ENCODE measurements at regions of chr1 and their contacts with region 1.

Region 1: DNA sequence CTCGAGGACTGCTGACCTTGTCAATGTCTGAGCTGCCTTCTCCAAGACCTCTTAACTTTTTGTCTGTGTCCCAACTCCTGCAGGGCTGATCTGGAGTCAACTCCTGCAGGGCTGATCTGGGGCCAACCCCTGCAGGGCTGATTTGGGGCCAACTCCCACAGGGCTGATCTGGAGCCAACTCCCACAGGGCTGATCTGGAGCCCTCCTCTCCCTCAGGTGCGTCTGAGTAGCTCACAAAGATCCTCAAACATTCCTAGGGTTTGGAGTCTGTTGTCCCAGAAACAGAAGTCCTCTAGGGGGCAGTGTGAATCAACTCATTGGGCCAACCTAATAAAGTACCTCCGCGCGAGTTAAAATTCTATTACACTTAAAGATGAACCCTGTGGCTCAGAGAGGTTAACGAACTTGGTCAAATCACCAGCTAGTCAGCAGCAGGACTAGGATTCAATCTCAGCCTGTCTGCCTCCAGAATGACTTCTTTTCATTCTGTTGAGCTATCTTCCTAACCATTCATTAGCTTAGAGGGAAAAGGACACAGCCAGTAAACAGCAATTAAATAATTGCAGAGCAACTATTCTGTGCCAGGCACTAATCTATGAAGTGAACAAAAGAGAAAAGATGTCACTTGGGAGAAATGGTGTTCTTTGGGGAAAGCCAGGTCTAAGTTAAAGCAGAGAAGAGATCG is 17.2 kb upstream of the RLF start:
- DNase-seq: peak; percentile 65
- ATAC-seq: peak; percentile 99
- H3K4me3 Mint-ChIP-seq: no peak overlapping the region
- H3K27ac Mint-ChIP-seq: peak overlapping the region; percentile 41; the same call in 1 of the 2 replicates
- H3K4me1 Mint-ChIP-seq: peaks cover 5% of the 10 kb centered on the region
- H3K27me3 Mint-ChIP-seq: peaks cover 39% of the 10 kb centered on the region
- CTCF ChIP-seq: peak; percentile 48; the same call in 1 of the 2 replicates

Region 2: GRCh38 chr1:40049725-40050124 is 94.3 kb before region 1 on chr1:
- CTCF ChIA-PET with region 1: no interaction called
- POLR2A ChIA-PET with region 1: no interaction called
- DNase-seq: no peak
- ATAC-seq: no peak
- H3K4me3 Mint-ChIP-seq: no peak overlapping the region
- H3K27ac Mint-ChIP-seq: peak overlapping the region; percentile 87
- H3K4me1 Mint-ChIP-seq: peaks cover 15% of the 10 kb centered on the region
- H3K27me3 Mint-ChIP-seq: no peaks in the 10 kb centered on the region
- CTCF ChIP-seq: no peak

Region 3: DNA sequence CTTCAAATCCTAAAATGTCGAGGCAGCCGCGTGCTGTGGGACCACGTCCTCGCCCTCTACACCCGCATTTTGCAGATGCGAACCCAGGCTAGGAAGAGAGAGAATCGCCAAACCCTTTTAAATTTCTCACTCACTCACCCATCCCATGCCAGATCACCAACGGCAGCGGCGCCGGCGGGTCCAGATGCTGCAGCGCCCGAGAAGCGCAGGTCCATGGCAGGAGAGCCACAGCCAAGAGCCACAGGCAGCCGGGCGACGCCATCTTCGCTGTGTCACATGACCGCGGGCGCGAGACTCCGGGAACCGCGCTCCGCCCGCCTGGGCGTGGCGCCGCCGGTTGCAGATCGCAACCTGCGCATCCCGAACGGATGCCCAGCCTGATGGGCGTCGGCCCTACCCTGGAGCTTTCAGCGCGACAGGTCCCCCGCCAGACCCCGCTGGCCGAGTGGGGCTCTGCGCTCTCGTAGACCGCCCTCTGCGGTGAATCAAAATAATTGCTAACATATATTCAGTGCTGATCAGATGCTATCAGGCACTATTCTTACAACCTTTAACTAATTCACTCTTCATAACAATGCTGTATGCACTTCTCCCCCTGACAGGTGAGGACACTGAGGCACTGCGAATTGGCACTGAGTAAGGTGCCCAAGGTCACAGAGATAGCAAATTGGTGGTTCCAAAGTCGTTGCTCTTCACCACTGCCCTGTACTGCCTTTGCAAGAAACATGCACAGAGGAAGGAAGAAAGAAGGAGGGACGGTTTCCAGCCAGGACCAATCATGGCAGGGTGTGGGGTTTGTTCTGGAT is 46.9 kb before region 1 on chr1 and contains the start of gene PPT1:
- CTCF ChIA-PET with region 1: interaction called, 10 read pairs
- POLR2A ChIA-PET with region 1: no interaction called
- DNase-seq: peak; percentile 85
- ATAC-seq: peak; percentile 95
- H3K4me3 Mint-ChIP-seq: peak within 1 kb of the TSS; percentile 92
- H3K27ac Mint-ChIP-seq: peak within 1 kb of the TSS; percentile 89
- H3K4me1 Mint-ChIP-seq: peaks cover 18% of the 10 kb centered on the region
- H3K27me3 Mint-ChIP-seq: peaks cover 30% of the 10 kb centered on the region
- CTCF ChIP-seq: no peak
- total RNA-seq, gene PPT1: 107 to 117 TPM (median 111 TPM) in 3 replicates

Region 4: GRCh38 chr1:40161125-40161887 is 17.3 kb after region 1 on chr1 and contains the start of gene RLF:
- CTCF ChIA-PET with region 1: interaction called, 21 read pairs
- POLR2A ChIA-PET with region 1: no interaction called
- DNase-seq: peak; percentile 94
- ATAC-seq: peak; percentile 97
- H3K4me3 Mint-ChIP-seq: no peak within 1 kb of the TSS
- H3K27ac Mint-ChIP-seq: peak within 1 kb of the TSS; percentile 100
- H3K4me1 Mint-ChIP-seq: peaks cover 14% of the 10 kb centered on the region
- H3K27me3 Mint-ChIP-seq: no peaks in the 10 kb centered on the region
- CTCF ChIP-seq: no peak
- total RNA-seq, gene RLF: 18.5 to 22.1 TPM (median 20.2 TPM) in 3 replicates

Region 5: DNA sequence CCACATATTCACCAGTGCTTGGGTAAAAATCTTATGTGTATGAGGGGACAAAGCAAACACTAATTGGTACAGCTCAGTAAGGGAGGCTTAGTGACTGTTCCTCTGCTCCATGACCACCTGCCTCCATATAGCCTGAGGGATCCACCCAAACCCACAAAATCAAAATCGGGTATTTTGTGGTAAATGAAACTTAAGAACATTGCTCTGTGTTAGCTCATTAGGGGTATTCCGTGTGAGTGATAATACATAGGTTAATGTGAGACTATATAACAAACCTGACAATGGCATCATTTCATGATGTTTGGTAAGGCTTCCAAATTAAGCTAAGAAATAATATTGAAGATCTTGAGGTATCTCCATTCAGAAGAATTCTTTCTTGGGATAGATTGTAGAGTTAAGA is 147.3 kb after region 1 on chr1:
- CTCF ChIA-PET with region 1: interaction called, 10 read pairs
- POLR2A ChIA-PET with region 1: no interaction called
- DNase-seq: no peak
- ATAC-seq: no peak
- H3K4me3 Mint-ChIP-seq: no peak overlapping the region
- H3K27ac Mint-ChIP-seq: no peak overlapping the region
- H3K4me1 Mint-ChIP-seq: peaks cover 12% of the 10 kb centered on the region
- H3K27me3 Mint-ChIP-seq: no peaks in the 10 kb centered on the region
- CTCF ChIP-seq: no peak

Region 6: DNA sequence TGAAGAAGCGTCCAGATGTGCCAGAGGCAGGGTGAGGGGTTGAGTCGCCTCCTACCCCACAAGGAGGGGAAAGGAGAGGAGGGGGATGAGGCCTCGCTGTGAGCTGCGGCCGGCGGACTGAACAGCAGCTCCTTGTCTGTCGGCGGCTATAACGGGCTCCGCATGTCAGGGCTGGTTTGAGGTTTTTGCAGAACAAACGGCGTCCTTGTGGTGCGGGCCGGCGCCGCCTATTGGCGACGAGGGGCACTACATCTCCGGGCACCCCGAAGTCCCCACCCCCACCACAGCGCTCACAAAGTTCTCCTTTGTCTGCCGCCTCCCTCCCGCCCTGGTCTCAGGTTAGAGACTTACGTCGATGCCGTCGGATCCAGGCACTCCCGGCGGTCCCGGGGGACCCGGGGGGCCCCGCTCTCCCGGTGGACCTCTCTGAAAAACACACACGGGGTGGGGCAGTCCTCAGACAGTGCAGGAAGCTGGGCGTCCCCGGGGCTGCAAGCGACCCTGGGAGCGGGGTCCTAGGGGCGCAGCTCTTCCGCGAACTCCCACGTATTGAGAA is 171.3 kb after region 1 on chr1:
- CTCF ChIA-PET with region 1: interaction called, 70 read pairs
- POLR2A ChIA-PET with region 1: interaction called, 3 read pairs
- DNase-seq: peak; percentile 89
- ATAC-seq: peak; percentile 65
- H3K4me3 Mint-ChIP-seq: peak overlapping the region; percentile 73
- H3K27ac Mint-ChIP-seq: no peak overlapping the region
- H3K4me1 Mint-ChIP-seq: peaks cover 20% of the 10 kb centered on the region
- H3K27me3 Mint-ChIP-seq: peaks cover 80% of the 10 kb centered on the region
- CTCF ChIP-seq: peak; percentile 96

Region 7: GRCh38 chr1:40404670-40405462 is 260.8 kb after region 1 on chr1:
- CTCF ChIA-PET with region 1: interaction called, 36 read pairs
- POLR2A ChIA-PET with region 1: no interaction called
- DNase-seq: no peak
- ATAC-seq: no peak
- H3K4me3 Mint-ChIP-seq: no peak overlapping the region
- H3K27ac Mint-ChIP-seq: no peak overlapping the region
- H3K4me1 Mint-ChIP-seq: peaks cover 12% of the 10 kb centered on the region
- H3K27me3 Mint-ChIP-seq: no peaks in the 10 kb centered on the region
- CTCF ChIP-seq: peak; percentile 72

Measured in WTC11 (cell line).